ENCODE measurements at regions of chr16 and their contacts with region 1.

Region 1: DNA sequence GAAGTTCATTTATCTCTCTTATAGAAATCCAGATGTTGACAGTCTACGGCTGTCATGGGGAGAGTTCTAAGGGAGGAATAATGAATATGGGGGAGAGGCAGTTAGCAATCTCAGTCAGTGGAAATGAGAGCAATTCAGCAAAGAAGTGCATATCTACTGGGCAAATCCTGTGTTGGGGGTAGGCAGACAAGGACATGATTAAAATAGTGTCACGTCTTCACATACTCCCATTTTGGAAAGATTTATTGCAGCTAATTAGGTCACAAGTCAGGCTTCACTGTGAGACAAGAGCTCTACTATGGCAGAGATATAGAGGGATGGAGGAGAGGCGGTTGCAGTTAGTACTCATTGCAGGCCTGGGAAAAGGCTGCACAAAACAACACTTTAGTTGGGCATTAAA is 29.8 kb downstream of the LRRC36 start:
- DNase-seq: no peak
- ATAC-seq: no peak
- H3K4me3 ChIP-seq: no peak overlapping the region
- H3K4me3 Mint-ChIP-seq: no peak overlapping the region
- H3K27ac ChIP-seq: no peak overlapping the region
- H3K27ac Mint-ChIP-seq: no peak overlapping the region
- H3K4me1 ChIP-seq: no peaks in the 10 kb centered on the region
- H3K4me1 Mint-ChIP-seq: no peaks in the 10 kb centered on the region
- H3K27me3 ChIP-seq: no peaks in the 10 kb centered on the region
- H3K27me3 Mint-ChIP-seq: peaks cover 0 to 25% (median 3%) of the 10 kb centered on the region in 5 donors

Region 2: DNA sequence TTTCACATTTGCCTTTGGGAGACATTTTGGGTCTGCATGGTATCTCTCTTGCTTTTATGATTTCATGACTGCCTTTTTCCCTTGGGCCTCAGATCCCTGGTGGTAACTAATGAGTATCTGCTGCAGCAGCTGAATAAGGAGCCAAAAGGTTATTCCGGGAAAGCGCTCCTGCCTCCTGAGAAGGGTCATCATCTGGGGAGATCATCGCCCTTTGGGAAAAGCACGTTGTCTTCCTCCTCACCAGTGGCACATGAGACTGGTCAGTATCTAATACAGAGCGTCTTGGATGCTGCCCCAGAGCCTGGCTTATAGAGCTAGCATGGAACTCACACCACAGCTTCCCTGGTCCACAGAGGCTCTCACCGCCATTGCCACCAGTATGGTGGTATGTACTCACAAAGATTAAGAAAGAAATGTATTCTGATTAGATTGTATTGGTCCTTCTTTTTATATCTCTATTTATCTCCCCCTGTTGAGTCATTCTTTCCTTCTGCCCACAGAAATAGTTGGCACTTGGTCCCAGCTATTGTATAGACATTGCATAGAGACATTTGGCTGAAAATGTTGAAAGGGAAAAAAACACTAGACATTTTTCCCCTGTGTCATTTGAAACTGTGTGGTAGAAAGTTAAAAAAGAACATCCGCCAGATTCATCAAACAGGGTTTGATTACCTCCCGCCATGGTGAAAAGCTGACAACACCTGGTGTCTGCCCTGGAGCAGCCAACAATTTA is 28.5 kb after region 1 on chr16:
- CTCF ChIA-PET with region 1: no interaction called
- POLR2A ChIA-PET with region 1: no interaction called
- intact Hi-C with region 1: no loop called
- DNase-seq: no peak
- ATAC-seq: no peak
- H3K4me3 ChIP-seq: no peak overlapping the region
- H3K4me3 Mint-ChIP-seq: no peak overlapping the region
- H3K27ac ChIP-seq: no peak overlapping the region
- H3K27ac Mint-ChIP-seq: no peak overlapping the region
- H3K4me1 ChIP-seq: no peaks in the 10 kb centered on the region
- H3K4me1 Mint-ChIP-seq: peaks cover 0 to 4% (median 0%) of the 10 kb centered on the region in 7 donors
- H3K27me3 ChIP-seq: no peaks in the 10 kb centered on the region
- H3K27me3 Mint-ChIP-seq: peaks cover 0 to 25% (median 0%) of the 10 kb centered on the region in 5 donors

Region 3: DNA sequence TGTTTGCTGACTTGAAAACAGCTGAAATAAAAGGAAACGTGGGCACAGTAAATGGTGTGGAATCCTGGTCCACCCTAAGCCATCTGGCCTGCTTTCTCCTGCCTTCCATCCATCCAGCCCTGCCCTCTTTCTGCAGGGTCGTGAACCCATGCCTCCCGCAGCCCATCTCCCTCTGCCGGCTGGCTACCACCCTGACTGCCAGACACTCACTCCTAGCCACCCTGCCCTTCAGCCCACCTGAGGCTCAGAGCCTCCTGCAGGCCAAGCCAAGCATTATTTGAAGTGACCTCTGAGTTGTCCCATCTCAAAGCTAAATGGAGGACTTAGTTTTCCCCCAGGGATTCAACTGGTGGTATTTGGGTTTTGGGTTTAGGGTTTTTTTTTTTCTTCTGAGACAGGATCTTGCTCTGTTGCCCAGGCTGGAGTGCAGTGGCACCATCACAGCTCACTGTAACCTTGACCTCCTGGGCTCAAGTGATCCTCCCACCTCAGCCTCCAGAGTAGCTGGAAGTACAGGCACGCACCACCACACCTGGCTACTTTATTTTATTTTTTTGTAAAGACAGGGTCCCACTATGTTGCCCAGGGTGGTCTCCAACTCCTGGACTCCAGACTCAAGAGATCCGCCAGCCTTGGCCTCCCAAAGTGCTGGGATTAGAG is 51.5 kb after region 1 on chr16:
- CTCF ChIA-PET with region 1: no interaction called
- POLR2A ChIA-PET with region 1: no interaction called
- intact Hi-C with region 1: no loop called
- DNase-seq: no peak
- ATAC-seq: no peak
- H3K4me3 ChIP-seq: no peak overlapping the region
- H3K4me3 Mint-ChIP-seq: no peak overlapping the region
- H3K27ac ChIP-seq: no peak overlapping the region
- H3K27ac Mint-ChIP-seq: no peak overlapping the region
- H3K4me1 ChIP-seq: no peaks in the 10 kb centered on the region
- H3K4me1 Mint-ChIP-seq: peaks cover 0 to 3% (median 0%) of the 10 kb centered on the region in 7 donors
- H3K27me3 ChIP-seq: no peaks in the 10 kb centered on the region
- H3K27me3 Mint-ChIP-seq: peaks cover 0 to 11% (median 7%) of the 10 kb centered on the region in 5 donors

Region 4: GRCh38 chr16:67461600-67462592 is 105.5 kb after region 1 on chr16:
- CTCF ChIA-PET with region 1: no interaction called
- POLR2A ChIA-PET with region 1: no interaction called
- intact Hi-C with region 1: loop called in 1 of 2 experiments (anchors 10 kb)
- DNase-seq: no peak
- ATAC-seq: no peak
- H3K4me3 ChIP-seq: no peak overlapping the region
- H3K4me3 Mint-ChIP-seq: no peak overlapping the region
- H3K27ac ChIP-seq: no peak overlapping the region
- H3K27ac Mint-ChIP-seq: no peak overlapping the region
- H3K4me1 ChIP-seq: peaks cover 0 to 7% of the 10 kb centered on the region in 2 donors
- H3K4me1 Mint-ChIP-seq: peaks cover 10 to 39% (median 24%) of the 10 kb centered on the region in 7 donors
- H3K27me3 ChIP-seq: no peaks in the 10 kb centered on the region
- H3K27me3 Mint-ChIP-seq: no peaks in the 10 kb centered on the region